Activated CD8-positive, alpha-beta T cell treated with anti-CD3 and anti-CD28 coated beads, Interleukin-2, amount 10 ng/mL, durations not matched to agents 7 days and 5 days (primary cell): ENCODE measurements at regions of chr3 and their contacts with region 1.

Region 1: GRCh38 chr3:108914774-108915641 is 38.7 kb downstream of the GUCA1C start:
- DNase-seq: peak; percentile 77
- ATAC-seq: peak; percentile 96
- H3K4me3 Mint-ChIP-seq: no peak overlapping the region
- H3K27ac Mint-ChIP-seq: peak overlapping the region; percentile 26
- H3K4me1 Mint-ChIP-seq: peaks cover 16% of the 10 kb centered on the region
- H3K27me3 Mint-ChIP-seq: peaks cover 18% of the 10 kb centered on the region

Region 2: DNA sequence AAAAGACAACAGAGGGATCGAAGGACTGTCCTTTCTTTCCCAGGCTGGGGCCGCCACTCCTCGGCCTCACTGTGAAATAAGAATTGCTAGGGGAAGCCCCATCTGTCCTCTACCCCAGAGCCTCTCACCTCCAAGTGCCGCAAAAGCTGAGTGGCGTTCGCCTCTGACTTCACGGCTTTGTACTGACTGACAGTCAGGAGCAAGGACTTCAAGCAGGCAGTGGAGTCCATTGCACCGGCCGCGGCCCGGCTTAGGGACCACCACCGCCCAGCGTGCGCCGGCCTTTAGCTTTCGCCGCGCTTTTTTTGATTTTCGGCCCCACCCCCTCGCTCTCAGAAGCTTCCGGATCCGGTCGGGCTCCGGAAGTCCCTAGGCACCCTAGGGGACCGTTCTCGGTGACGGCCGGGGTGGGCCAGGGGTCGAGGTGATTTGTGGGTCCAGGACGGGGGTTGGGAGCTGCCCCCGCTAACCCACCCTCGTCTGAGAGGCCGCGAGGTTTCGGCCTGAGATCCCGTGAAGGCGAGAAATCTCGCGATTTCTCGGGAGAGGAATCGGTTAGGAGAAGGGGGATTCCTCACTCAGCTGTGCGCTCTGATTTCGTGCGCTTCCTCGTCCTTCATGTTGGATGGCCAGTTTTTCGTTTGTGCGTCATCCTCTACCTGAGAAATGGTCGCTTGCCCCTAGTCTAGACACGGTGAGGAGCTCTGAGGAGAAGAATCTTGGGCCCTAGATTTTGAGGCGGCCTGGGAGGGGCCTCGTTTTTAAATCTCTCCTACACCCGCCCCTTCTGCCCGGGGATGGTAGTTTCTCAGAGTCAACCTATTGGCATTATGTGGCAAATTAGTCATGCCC is 325.6 kb before region 1 on chr3 and contains the starts of genes CIP2A and DZIP3:
- CTCF ChIA-PET with region 1: interaction called, 15 read pairs
- POLR2A ChIA-PET with region 1: interaction called, 6 read pairs
- DNase-seq: peak; percentile 92
- ATAC-seq: peak; percentile 93
- H3K4me3 Mint-ChIP-seq: peak within 1 kb of the TSS; percentile 100
- H3K27ac Mint-ChIP-seq: peak within 1 kb of the TSS; percentile 99
- H3K4me1 Mint-ChIP-seq: peaks cover 45% of the 10 kb centered on the region
- H3K27me3 Mint-ChIP-seq: no peaks in the 10 kb centered on the region
- total RNA-seq, gene CIP2A: 58.5 to 64.3 TPM
- total RNA-seq, gene DZIP3: 20.5 to 20.8 TPM

Region 3: DNA sequence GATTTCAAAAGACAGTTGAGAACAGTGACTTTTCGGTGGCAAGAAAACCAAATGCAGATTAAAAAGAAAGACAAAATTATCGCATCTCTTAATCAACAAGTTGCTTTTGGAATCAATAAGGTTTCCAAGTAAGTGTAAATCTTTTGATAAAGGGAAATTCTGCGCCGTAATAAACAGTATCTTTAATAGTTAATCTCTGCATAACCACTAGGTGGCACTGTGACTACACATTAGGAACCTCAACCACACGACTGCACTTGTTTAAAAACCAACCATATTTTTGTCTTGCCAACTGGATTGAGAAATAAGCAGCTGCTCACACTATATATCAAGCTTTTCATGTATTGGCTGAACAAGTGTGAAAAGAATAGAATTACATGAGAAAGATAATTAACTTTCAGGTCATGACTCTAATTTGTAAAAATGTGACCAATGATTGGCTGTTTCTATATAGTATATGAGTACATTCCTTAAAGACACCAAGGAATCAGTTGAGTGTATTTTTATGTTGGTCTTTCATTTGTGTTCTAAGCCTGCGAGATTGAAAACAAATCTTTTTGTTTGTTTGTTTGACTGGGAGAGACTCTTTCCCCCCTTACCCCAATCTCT is 252.8 kb before region 1 on chr3:
- CTCF ChIA-PET with region 1: interaction called, 131 read pairs
- POLR2A ChIA-PET with region 1: interaction called, 4 read pairs
- DNase-seq: peak; percentile 67
- ATAC-seq: peak; percentile 72
- H3K4me3 Mint-ChIP-seq: no peak overlapping the region
- H3K27ac Mint-ChIP-seq: no peak overlapping the region
- H3K4me1 Mint-ChIP-seq: peaks cover 19% of the 10 kb centered on the region
- H3K27me3 Mint-ChIP-seq: no peaks in the 10 kb centered on the region

Region 4: DNA sequence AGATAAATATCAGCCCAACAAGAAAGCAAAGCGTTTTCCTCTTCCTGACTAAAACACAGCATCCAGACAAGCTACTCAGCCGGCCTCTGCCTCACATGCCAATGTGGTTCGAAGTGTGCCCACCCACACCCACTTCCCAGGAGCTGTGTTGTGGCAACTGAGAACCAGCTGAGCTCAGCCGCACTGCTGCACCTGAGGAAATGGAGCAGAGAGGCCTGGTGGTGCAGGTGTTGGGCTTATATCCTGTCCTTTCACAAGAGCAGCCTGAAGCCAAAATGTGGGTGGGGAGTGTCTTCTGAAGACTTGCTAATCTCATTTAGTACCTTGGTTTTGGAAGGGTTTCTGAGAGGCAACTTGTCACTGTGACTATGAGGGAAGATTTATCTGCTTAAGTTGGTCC is 134.8 kb before region 1 on chr3:
- CTCF ChIA-PET with region 1: no interaction called
- POLR2A ChIA-PET with region 1: no interaction called
- DNase-seq: peak; percentile 67
- ATAC-seq: peak; percentile 87
- H3K4me3 Mint-ChIP-seq: peak overlapping the region; percentile 10
- H3K27ac Mint-ChIP-seq: peak overlapping the region; percentile 72
- H3K4me1 Mint-ChIP-seq: peaks cover 39% of the 10 kb centered on the region
- H3K27me3 Mint-ChIP-seq: peaks cover 6% of the 10 kb centered on the region

Region 5: DNA sequence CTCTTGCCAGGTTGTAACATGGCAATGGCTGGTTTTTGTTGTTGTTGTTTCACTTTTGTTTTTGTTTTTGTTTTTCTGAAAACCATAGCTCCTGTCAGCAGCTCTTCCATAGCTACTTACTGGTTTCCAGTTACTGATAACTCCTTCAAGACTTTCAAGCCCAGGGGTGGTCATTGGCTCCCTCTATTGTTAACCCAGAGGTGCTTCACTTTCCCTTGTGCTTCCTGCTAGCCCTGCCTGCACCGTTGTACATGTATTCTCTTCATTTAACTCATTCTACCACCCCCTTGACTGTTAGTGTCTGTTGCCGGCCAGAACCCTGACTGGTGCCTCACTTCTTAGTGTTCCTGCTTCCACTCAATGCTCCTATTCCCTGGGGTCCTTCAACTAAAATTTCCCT is 96.6 kb before region 1 on chr3:
- CTCF ChIA-PET with region 1: interaction called, 83 read pairs
- POLR2A ChIA-PET with region 1: interaction called, 3 read pairs
- DNase-seq: peak; percentile 80
- ATAC-seq: peak; percentile 92
- H3K4me3 Mint-ChIP-seq: no peak overlapping the region
- H3K27ac Mint-ChIP-seq: peak overlapping the region; percentile 54
- H3K4me1 Mint-ChIP-seq: peaks cover 34% of the 10 kb centered on the region
- H3K27me3 Mint-ChIP-seq: no peaks in the 10 kb centered on the region

Region 6: DNA sequence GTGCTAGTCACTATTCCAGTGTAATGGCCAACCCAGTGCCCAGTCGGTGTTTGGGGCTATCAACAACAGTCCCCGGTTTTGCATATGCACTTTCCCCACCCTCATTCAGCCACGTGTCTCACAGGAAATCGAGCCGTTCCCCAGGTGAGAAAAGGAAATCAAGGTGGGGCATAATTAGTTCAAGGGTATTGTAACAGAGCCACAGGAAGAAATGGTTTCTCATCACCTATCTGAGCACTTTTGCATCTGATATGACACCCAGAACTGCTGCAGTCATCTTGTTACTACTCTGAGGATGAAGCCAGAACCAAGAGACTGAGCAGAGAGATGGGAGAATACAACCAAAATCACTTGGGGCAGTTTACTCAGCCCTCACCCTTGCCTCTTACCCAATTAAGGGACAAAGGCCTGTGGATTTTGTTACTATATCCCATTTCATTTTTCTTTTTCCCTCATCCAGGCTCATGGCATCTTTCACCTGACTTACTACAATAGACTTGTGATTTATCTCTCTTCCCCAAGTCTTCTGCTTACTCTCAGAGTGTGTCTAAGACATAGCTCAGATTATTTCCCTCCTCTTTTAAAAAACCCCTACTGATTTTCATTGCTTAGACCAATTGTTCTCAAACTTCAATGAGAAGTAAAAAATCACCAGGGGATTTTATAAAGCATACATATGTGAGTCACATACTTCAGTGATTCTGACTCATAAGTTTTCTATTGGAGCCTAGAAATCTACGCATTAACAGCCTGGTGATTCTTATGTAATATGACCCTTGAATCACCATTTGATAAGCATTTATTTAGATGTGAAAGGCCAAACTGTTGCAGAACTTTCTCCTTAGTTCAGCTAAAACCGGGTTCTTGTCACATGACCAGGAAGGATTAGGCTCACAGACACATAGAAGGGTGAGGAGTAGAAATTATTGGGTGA is 51.9 kb before region 1 on chr3:
- CTCF ChIA-PET with region 1: interaction called, 11 read pairs
- POLR2A ChIA-PET with region 1: no interaction called
- DNase-seq: no peak
- ATAC-seq: peak; percentile 39
- H3K4me3 Mint-ChIP-seq: no peak overlapping the region
- H3K27ac Mint-ChIP-seq: peak overlapping the region; percentile 77
- H3K4me1 Mint-ChIP-seq: peaks cover 33% of the 10 kb centered on the region
- H3K27me3 Mint-ChIP-seq: no peaks in the 10 kb centered on the region

Region 7: DNA sequence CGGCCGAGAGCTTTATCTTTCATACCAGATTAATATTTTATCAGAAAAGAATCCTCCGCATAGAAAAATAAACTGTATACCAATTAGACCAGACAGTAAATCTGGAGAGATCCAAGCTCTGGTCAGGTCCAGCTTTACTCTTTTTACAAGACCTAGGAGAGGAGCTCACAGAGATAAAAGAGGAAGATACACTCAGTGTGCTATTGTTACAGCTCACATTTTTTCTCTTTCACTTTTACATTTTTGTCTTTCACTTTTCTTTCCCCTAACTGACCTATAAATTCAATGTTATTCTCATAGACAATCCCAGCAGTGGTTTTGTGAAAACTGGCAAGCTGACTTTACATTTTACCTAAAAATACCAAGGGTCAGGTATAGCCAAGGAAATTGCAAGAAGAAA is 17.1 kb before region 1 on chr3:
- CTCF ChIA-PET with region 1: interaction called, 14 read pairs
- POLR2A ChIA-PET with region 1: no interaction called
- DNase-seq: no peak
- ATAC-seq: peak; percentile 73
- H3K4me3 Mint-ChIP-seq: peak overlapping the region; percentile 17
- H3K27ac Mint-ChIP-seq: peak overlapping the region; percentile 70
- H3K4me1 Mint-ChIP-seq: peaks cover 24% of the 10 kb centered on the region
- H3K27me3 Mint-ChIP-seq: no peaks in the 10 kb centered on the region